CD14-positive monocyte (primary cell): ENCODE measurements at regions of chr1 and their contacts with region 1.

Region 1: DNA sequence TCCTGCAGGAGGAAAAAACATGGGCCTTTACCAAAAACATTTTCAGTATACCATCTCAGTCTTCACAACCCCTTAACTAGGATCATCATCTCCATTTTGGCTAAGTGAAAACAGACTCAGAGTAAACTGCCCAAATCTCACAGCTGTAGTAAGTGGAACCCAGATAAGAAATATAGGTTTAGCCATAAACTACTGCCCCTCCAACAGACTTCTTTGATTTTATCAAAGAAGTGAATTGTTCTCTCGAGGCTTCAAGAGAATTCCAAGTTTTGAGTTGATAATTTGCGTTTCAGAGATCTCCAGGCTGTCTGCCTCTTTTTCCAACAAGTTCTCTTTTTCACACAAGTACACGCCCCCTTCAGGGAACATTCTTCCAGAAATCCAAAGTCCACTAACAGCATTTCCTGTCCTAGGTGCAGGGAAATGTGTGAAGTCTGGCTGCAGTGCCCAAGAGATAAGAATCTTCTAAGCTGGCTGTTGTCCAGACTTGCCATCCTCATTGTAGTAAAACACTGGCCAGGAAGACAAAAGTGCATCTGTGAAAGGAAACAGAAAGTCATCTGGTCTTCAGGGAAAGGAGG is 30.8 kb downstream of the RNF19B start:
- DNase-seq: no peak
- H3K4me3 ChIP-seq: no peak overlapping the region
- H3K4me3 Mint-ChIP-seq: no peak overlapping the region
- H3K27ac ChIP-seq: no peak overlapping the region
- H3K27ac Mint-ChIP-seq: peak overlapping the region in 3 of 7 donors; percentile 0 to 68 (median 11)
- H3K4me1 ChIP-seq: peaks cover 0 to under 1% of the 10 kb centered on the region in 2 donors
- H3K4me1 Mint-ChIP-seq: peaks cover 7% of the 10 kb centered on the region
- H3K27me3 ChIP-seq: no peaks in the 10 kb centered on the region
- H3K27me3 Mint-ChIP-seq: peaks cover 0 to 2% (median 0%) of the 10 kb centered on the region in 3 donors
- CTCF ChIP-seq: peak; percentile 42

Region 2: DNA sequence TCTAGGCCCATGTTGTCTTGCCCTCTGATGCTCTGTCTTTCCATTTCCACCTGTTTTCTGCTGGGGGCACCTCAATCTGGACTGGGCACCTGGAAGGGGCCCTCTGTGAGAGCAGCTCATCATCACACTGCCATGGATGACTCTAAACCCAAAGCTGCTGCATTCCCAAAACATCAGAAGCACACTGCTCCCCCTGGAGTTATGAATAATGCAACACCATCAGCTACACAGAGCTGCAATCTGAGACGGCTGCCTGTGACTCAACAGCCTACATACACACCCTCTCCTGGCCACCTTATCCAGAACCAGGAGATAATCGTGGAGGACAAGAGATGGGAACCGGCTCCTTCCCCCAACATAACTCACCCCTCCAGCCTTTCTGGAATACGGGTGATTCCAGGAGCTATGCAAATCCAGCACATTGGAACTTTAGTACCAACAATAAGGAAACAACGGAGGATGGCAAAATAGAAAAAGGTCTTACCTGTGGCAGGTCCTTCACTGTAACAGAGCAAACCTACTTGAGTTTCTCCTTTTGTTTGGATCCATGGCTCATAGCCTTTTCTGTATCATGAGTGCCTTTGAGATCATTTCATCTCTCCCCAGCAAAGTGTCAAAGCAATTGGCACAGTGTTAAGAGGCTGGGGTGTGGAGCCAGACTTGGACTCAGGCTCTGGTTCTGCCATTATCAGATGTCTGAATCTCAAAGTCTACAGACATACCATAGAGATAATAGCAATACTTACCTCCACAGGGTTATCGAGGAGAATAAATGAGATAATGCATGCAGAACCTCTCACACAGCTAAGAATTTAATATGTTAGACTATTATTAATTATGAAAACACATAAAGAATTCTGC is 73.6 kb after region 1 on chr1:
- intact Hi-C with region 1: loop called (anchors 1 to 5 kb)
- DNase-seq: peak; percentile 67 to 85 (median 80)
- H3K4me3 ChIP-seq: no peak overlapping the region
- H3K4me3 Mint-ChIP-seq: no peak overlapping the region
- H3K27ac ChIP-seq: peak overlapping the region in 1 of 2 donors; percentile 6
- H3K27ac Mint-ChIP-seq: peak overlapping the region in 6 of 7 donors; percentile 38 to 85 (median 66)
- H3K4me1 ChIP-seq: peaks cover 0 to 5% of the 10 kb centered on the region in 2 donors
- H3K4me1 Mint-ChIP-seq: peaks cover 24% of the 10 kb centered on the region
- H3K27me3 ChIP-seq: no peaks in the 10 kb centered on the region
- H3K27me3 Mint-ChIP-seq: no peaks in the 10 kb centered on the region
- CTCF ChIP-seq: peak; percentile 58

Region 3: GRCh38 chr1:33455539-33456501 is 522.0 kb after region 1 on chr1:
- intact Hi-C with region 1: no loop called
- DNase-seq: peak; percentile 59 to 74 (median 72)
- H3K4me3 ChIP-seq: peak overlapping the region in 1 of 3 experiments; percentile 53
- H3K4me3 Mint-ChIP-seq: peak overlapping the region; percentile 73 to 89
- H3K27ac ChIP-seq: peak overlapping the region; percentile 9 to 22
- H3K27ac Mint-ChIP-seq: peak overlapping the region; percentile 67 to 89 (median 85)
- H3K4me1 ChIP-seq: peaks cover 31 to 35% of the 10 kb centered on the region in 2 donors
- H3K4me1 Mint-ChIP-seq: peaks cover 42% of the 10 kb centered on the region
- H3K27me3 ChIP-seq: no peaks in the 10 kb centered on the region
- H3K27me3 Mint-ChIP-seq: peaks cover 0 to 12% (median 2%) of the 10 kb centered on the region in 3 donors
- CTCF ChIP-seq: peak; percentile 67